ENCODE measurements at regions of chr16 and their contacts with region 1.

Region 1: DNA sequence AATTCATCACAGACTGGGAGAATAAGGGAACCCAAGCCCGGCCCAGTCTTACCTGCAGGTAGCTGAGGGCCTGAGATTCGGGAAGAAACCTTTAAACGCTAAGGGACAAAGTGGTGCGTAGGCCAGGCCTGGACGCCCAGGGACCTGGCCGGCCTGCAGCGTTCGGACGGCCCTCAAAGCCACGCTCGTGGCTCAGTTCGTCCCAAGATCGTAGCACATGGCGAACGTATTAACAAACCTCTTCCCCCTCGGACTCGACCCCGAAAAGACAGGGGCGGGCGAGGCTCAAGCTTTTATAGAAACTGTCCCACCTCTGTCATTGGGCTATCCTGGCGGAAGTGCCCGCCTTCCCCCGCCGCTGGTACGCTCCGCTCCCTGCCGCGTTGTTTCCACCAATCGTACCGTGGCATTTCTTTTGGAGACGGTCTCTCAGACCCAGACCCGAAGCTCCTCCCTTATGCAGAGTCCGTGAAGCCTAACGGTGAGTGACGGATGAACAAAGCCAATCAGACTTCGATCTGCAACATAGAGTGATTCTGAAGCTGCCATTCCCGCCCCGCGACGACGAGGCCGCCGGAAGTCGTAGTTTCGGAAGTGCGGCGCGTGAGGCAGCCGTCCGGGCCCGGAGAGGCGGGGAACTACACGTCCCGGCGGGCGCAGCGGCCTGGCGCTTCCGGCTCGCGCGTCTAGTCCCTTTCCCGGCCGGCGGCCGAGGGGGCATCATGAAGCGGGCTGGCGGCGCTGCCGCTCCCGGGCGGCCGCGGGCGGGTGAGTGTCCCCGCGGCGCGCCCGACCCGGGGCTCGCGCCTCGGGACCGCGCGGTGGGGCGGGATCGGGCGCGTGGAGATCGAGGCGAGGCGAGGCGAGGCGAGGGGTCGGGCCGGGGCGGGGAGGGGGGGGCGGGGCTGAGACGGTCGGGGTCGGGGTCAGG is at the start of gene TRAF7:
- H3K4me3 ChIP-seq: peak within 1 kb of the TSS; percentile 77
- H3K27ac ChIP-seq: peak within 1 kb of the TSS; percentile 64
- H3K4me1 ChIP-seq: no peaks in the 10 kb centered on the region
- CTCF ChIP-seq: no peak

Region 2: DNA sequence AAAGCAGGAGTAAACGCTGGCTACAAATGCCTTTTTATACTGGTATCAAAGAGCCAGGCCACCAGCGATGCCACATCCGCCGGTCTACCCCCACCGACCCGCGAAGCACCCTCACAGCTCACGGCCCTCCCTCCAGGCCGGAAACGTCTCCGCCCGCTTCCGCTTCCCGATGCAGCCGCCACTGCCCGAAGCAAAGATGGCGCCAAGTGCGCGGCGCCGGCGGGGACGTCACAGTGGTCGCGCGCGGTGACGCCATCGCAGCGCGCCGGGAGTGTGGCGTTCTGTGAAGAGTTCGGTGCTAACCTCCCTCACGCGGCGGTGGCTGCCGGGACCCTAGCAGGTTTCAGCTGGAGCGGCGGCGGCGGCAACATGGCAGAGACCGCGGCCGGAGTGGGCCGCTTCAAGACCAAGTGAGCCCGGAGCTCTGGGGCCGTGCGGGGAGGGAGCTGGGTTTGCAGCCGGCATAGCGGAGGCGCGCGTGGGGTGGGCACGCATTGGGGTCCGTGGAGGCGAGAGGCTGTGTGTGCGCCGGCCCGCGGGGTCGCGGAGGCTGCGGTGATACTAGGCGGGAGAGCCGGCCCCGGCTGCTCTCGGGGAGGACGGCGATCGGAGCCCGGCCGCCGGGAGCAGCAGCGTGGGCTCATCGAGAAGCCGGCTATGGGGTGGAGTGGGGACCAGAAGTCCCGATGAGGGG is 183.4 kb before region 1 on chr16 and contains the start of gene TBL3:
- CTCF ChIA-PET with region 1: no interaction called
- POLR2A ChIA-PET with region 1: interaction called, 12 read pairs
- H3K4me3 ChIP-seq: peak within 1 kb of the TSS; percentile 97
- H3K27ac ChIP-seq: peak within 1 kb of the TSS; percentile 88
- H3K4me1 ChIP-seq: no peaks in the 10 kb centered on the region
- CTCF ChIP-seq: peak; percentile 30

Region 3: GRCh38 chr16:2009789-2010510 is 145.4 kb before region 1 on chr16 and contains the start of gene ZNF598:
- CTCF ChIA-PET with region 1: interaction called, 3 read pairs
- POLR2A ChIA-PET with region 1: interaction called, 20 read pairs
- H3K4me3 ChIP-seq: peak within 1 kb of the TSS; percentile 75
- H3K27ac ChIP-seq: peak within 1 kb of the TSS; percentile 97
- H3K4me1 ChIP-seq: peaks cover 24% of the 10 kb centered on the region
- CTCF ChIP-seq: no peak

Region 4: DNA sequence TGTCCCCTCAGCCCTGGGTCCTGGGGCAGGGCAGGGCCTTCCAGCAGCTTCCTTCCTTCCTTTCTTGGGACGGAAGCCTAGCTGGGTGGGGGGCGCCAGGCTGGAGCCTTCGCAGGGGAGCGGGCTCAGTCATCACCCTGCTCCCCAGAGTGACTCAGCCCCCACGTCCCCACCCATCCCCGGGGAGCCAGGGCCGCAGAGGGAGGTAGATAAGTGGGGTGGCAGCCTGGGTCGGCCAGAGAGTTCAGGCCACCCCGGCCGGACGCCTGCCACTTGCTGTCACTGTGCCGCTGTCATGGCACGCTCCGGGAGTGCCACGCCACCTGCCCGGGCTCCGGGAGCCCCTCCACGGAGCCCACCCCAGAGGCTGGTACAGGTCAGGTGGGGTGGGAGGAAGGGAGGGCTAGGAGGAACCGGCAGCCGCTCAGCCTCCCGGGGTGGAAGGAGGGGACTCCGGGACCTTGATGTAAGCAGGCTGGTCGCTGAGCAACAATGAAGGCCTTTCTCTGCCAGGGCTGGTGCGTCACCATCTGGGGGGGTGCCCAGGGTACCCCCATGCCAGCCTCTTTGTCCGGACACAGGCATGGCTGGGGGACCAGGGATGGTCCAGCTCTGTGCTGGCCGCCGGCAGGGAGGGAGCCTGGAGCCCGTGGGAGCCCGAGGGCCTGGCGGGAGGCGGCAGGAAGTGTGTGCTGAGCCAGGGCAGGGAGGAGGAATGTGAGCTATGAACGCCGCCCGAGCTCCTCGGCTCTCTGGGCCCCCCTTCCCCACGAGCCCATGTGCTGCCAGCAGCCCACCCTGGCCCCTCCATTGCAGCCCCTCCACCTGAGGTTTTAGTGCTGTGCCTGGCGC is 122.1 kb before region 1 on chr16:
- CTCF ChIA-PET with region 1: no interaction called
- POLR2A ChIA-PET with region 1: interaction called, 16 read pairs
- H3K4me3 ChIP-seq: no peak overlapping the region
- H3K27ac ChIP-seq: no peak overlapping the region
- H3K4me1 ChIP-seq: peaks cover 4% of the 10 kb centered on the region; the same call in 1 of the 2 replicates
- CTCF ChIP-seq: no peak

Region 5: GRCh38 chr16:2090777-2091546 is 64.4 kb before region 1 on chr16:
- CTCF ChIA-PET with region 1: no interaction called
- POLR2A ChIA-PET with region 1: no interaction called
- H3K4me3 ChIP-seq: no peak overlapping the region
- H3K27ac ChIP-seq: no peak overlapping the region
- H3K4me1 ChIP-seq: no peaks in the 10 kb centered on the region
- CTCF ChIP-seq: no peak

Region 6: GRCh38 chr16:2170080-2170479 is 14.7 kb after region 1 on chr16:
- CTCF ChIA-PET with region 1: interaction called, 3 read pairs
- POLR2A ChIA-PET with region 1: interaction called, 30 read pairs
- H3K4me3 ChIP-seq: no peak overlapping the region
- H3K27ac ChIP-seq: no peak overlapping the region
- H3K4me1 ChIP-seq: no peaks in the 10 kb centered on the region
- CTCF ChIP-seq: no peak

Region 7: GRCh38 chr16:2194852-2195321 is 39.5 kb after region 1 on chr16:
- CTCF ChIA-PET with region 1: interaction called, 7 read pairs
- POLR2A ChIA-PET with region 1: interaction called, 30 read pairs
- H3K4me3 ChIP-seq: no peak overlapping the region
- H3K27ac ChIP-seq: no peak overlapping the region
- H3K4me1 ChIP-seq: peaks cover 9% of the 10 kb centered on the region; the same call in 1 of the 2 replicates
- CTCF ChIP-seq: peak; percentile 89

Region 8: GRCh38 chr16:2251483-2252240 is 96.3 kb after region 1 on chr16 and contains the start of gene ECI1:
- CTCF ChIA-PET with region 1: interaction called, 4 read pairs
- POLR2A ChIA-PET with region 1: interaction called, 13 read pairs
- H3K4me3 ChIP-seq: peak within 1 kb of the TSS; percentile 78
- H3K27ac ChIP-seq: peak within 1 kb of the TSS; percentile 91
- H3K4me1 ChIP-seq: peaks cover 7% of the 10 kb centered on the region
- CTCF ChIP-seq: peak; percentile 97